ENCODE measurements at regions of chr10 and their contacts with region 1.

Region 1: GRCh38 chr10:61882621-61883373 is 18.7 kb upstream of the ARID5B start:
- DNase-seq: peak; percentile 88
- H3K4me3 Mint-ChIP-seq: no peak overlapping the region
- H3K27ac Mint-ChIP-seq: peak overlapping the region; percentile 83
- H3K4me1 Mint-ChIP-seq: peaks cover 30% of the 10 kb centered on the region
- H3K27me3 Mint-ChIP-seq: no peaks in the 10 kb centered on the region

Region 2: DNA sequence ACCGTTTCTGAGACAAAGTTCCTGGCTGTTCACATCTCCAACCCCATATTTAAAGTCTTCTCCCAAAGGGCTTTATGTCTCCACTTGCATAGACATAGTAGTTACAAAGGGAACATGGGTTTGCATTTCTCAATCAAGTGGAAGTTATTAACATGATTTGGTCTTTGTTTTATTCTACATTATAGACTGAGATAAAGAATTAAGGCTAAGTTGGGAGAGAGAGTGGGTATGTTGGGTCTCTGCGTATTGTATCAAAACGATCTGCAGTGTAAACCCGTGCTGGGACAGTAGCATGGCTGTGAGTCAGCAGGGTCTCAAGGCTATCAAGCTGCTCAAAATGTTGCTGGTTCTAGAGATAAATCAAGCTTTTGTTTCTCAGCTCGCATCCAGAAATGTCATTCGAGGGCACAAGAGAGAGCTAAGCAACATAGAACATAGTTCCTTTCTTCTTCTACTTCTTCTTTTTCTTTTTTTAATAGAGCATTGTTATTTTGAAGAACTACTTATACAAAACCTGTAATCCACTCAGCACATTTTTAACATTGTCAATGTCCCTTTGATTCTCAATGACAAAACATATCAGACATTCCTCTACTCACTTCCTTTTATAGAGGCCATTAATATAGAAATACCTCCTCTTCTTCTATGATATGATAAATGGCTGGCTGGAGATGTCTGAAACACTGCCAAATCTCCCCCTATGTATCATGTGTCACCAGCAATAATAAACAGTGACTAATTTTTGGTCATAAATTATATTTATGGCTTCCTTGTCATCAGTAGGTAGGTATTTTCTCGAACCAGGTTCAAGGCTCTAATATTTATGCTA is 904.3 kb before region 1 on chr10:
- CTCF ChIA-PET with region 1: no interaction called
- intact Hi-C with region 1: loop called (anchors 10 kb)
- DNase-seq: no peak
- H3K4me3 Mint-ChIP-seq: no peak overlapping the region
- H3K27ac Mint-ChIP-seq: no peak overlapping the region
- H3K4me1 Mint-ChIP-seq: peaks cover 8% of the 10 kb centered on the region
- H3K27me3 Mint-ChIP-seq: peaks cover 7% of the 10 kb centered on the region

Region 3: GRCh38 chr10:61896854-61897661 is 14.3 kb after region 1 on chr10:
- CTCF ChIA-PET with region 1: interaction called, 9 read pairs
- intact Hi-C with region 1: loop called (anchors 1 kb)
- DNase-seq: peak; percentile 78
- H3K4me3 Mint-ChIP-seq: peak overlapping the region; percentile 77
- H3K27ac Mint-ChIP-seq: peak overlapping the region; percentile 90
- H3K4me1 Mint-ChIP-seq: peaks cover 40% of the 10 kb centered on the region
- H3K27me3 Mint-ChIP-seq: no peaks in the 10 kb centered on the region

Region 4: DNA sequence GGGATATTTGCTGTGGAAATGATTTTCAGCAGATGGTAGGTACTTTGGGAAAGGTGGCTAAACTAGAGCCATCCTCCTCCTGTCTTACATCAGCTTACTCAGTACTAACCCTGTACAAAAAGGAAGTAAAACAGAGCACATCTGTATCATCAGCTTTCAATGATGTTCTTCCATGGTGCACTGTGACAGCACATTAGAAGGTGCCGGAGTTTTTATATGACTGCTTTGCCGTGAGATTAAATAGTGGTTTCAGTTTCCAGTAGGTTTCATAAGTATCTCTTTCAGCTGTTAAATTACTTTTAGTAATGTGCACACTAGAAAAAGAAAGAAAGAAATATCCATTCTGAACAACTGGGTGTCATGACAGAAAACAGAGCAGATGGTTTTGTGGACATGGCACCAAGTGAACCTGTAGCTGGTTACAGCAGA is 105.2 kb after region 1 on chr10:
- CTCF ChIA-PET with region 1: no interaction called
- intact Hi-C with region 1: loop called (anchors 1 kb)
- DNase-seq: peak; percentile 64
- H3K4me3 Mint-ChIP-seq: peak overlapping the region; percentile 51
- H3K27ac Mint-ChIP-seq: peak overlapping the region; percentile 96
- H3K4me1 Mint-ChIP-seq: peaks cover 89% of the 10 kb centered on the region
- H3K27me3 Mint-ChIP-seq: no peaks in the 10 kb centered on the region

Region 5: GRCh38 chr10:62248465-62248864 is 365.7 kb after region 1 on chr10:
- CTCF ChIA-PET with region 1: no interaction called
- intact Hi-C with region 1: no loop called
- DNase-seq: no peak
- H3K4me3 Mint-ChIP-seq: no peak overlapping the region
- H3K27ac Mint-ChIP-seq: no peak overlapping the region
- H3K4me1 Mint-ChIP-seq: peaks cover 52% of the 10 kb centered on the region
- H3K27me3 Mint-ChIP-seq: no peaks in the 10 kb centered on the region

Region 6: DNA sequence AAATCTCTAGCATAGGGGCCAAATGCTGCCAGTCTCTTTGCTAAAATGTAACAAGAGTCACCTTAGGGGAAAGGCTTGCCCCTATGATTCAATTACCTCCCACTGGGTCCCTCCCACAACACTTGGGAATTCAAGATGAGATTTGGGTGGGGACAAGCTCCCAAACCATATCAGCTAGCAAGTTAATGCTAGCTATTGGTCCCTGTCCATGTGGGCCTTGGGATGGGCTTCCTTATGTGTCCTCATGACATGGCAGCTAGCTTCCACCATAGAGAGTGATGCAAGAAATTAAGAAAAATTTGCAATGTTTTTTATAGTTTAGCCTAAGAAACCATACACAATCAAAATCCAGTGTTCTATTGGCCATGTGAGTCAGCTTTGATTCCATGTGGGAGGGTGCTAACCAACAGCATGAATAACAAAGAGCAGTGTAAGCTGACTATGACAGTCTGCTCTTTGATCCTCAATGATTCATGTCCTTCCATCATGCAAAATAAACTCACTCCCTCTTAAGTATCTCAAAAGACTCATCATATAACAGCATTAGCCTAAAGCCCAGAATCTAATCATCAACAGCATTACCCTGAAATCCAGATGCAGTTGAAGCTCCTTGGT is 469.7 kb after region 1 on chr10:
- CTCF ChIA-PET with region 1: no interaction called
- intact Hi-C with region 1: loop called (anchors 10 kb)
- DNase-seq: peak; percentile 46
- H3K4me3 Mint-ChIP-seq: no peak overlapping the region
- H3K27ac Mint-ChIP-seq: no peak overlapping the region
- H3K4me1 Mint-ChIP-seq: peaks cover 19% of the 10 kb centered on the region
- H3K27me3 Mint-ChIP-seq: peaks cover 6% of the 10 kb centered on the region

Region 7: GRCh38 chr10:62760401-62760800 is 877.6 kb after region 1 on chr10:
- CTCF ChIA-PET with region 1: no interaction called
- intact Hi-C with region 1: no loop called
- DNase-seq: no peak
- H3K4me3 Mint-ChIP-seq: no peak overlapping the region
- H3K27ac Mint-ChIP-seq: no peak overlapping the region
- H3K4me1 Mint-ChIP-seq: peaks cover 24% of the 10 kb centered on the region
- H3K27me3 Mint-ChIP-seq: no peaks in the 10 kb centered on the region

Region 8: DNA sequence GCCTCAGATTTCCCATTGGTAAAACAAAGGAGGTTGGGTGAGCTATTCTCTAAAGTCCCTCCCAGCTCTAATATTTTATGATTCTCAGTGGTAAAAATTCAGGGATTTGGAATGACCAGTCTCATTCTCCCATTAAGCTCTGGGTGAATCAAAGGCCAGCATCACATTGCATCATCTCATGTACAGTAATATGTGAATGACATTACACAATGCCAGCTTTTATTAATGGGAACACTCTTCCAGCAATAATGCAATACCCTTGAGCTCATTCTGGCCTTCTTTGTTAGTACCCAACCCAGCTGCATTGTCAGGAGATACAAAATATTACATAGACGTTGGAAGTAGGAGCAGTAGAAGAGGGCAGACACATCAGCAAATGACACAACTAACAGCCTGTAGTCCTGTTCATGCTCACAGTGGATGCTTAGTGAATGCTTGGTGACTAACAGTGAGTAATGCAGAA is 1033.4 kb after region 1 on chr10:
- CTCF ChIA-PET with region 1: no interaction called
- intact Hi-C with region 1: no loop called
- DNase-seq: no peak
- H3K4me3 Mint-ChIP-seq: no peak overlapping the region
- H3K27ac Mint-ChIP-seq: no peak overlapping the region
- H3K4me1 Mint-ChIP-seq: peaks cover 8% of the 10 kb centered on the region
- H3K27me3 Mint-ChIP-seq: peaks cover 12% of the 10 kb centered on the region